ENCODE measurements at regions of chr16 and their contacts with region 1.

Region 1: GRCh38 chr16:67226804-67227557 is at the start of gene TMEM208:
- DNase-seq: peak; percentile 99
- ATAC-seq: peak; percentile 99
- H3K4me3 ChIP-seq: peak within 1 kb of the TSS; percentile 77 to 99 (median 86)
- H3K4me3 Mint-ChIP-seq: peak within 1 kb of the TSS; percentile 100
- H3K27ac ChIP-seq: peak within 1 kb of the TSS; percentile 52 to 82
- H3K27ac Mint-ChIP-seq: peak within 1 kb of the TSS; percentile 100
- H3K4me1 ChIP-seq: peaks cover 15 to 22% of the 10 kb centered on the region in 2 donors
- H3K4me1 Mint-ChIP-seq: peaks cover 29% of the 10 kb centered on the region
- H3K27me3 ChIP-seq: no peaks in the 10 kb centered on the region
- H3K27me3 Mint-ChIP-seq: no peaks in the 10 kb centered on the region
- CTCF ChIP-seq: peak; percentile 13
- total RNA-seq, gene TMEM208: 36.3 and 40.4 TPM in 2 replicates

Region 2: GRCh38 chr16:67084345-67085028 is 142.5 kb before region 1 on chr16:
- CTCF ChIA-PET with region 1: no interaction called
- POLR2A ChIA-PET with region 1: no interaction called
- intact Hi-C with region 1: no loop called
- DNase-seq: no peak
- ATAC-seq: no peak
- H3K4me3 ChIP-seq: no peak overlapping the region
- H3K4me3 Mint-ChIP-seq: no peak overlapping the region
- H3K27ac ChIP-seq: no peak overlapping the region
- H3K27ac Mint-ChIP-seq: no peak overlapping the region
- H3K4me1 ChIP-seq: peaks cover 0 to 3% of the 10 kb centered on the region in 2 donors
- H3K4me1 Mint-ChIP-seq: peaks cover 4% of the 10 kb centered on the region
- H3K27me3 ChIP-seq: no peaks in the 10 kb centered on the region
- H3K27me3 Mint-ChIP-seq: no peaks in the 10 kb centered on the region
- CTCF ChIP-seq: no peak

Region 3: GRCh38 chr16:67191995-67192681 is 34.8 kb before region 1 on chr16 and contains the start of gene E2F4:
- CTCF ChIA-PET with region 1: interaction called, 3 read pairs
- POLR2A ChIA-PET with region 1: interaction called, 4 read pairs
- intact Hi-C with region 1: loop called (anchors 1 kb)
- DNase-seq: peak; percentile 93
- ATAC-seq: peak; percentile 96
- H3K4me3 ChIP-seq: peak within 1 kb of the TSS; percentile 54 to 98 (median 97)
- H3K4me3 Mint-ChIP-seq: peak within 1 kb of the TSS; percentile 92
- H3K27ac ChIP-seq: peak within 1 kb of the TSS; percentile 52 to 93
- H3K27ac Mint-ChIP-seq: peak within 1 kb of the TSS; percentile 92
- H3K4me1 ChIP-seq: peaks cover 22 to 28% of the 10 kb centered on the region in 2 donors
- H3K4me1 Mint-ChIP-seq: peaks cover 34% of the 10 kb centered on the region
- H3K27me3 ChIP-seq: peaks cover 0 to 17% (median under 1%) of the 10 kb centered on the region in 4 experiments
- H3K27me3 Mint-ChIP-seq: peaks cover 2% of the 10 kb centered on the region
- CTCF ChIP-seq: no peak
- total RNA-seq, gene E2F4: 104 and 106 TPM in 2 replicates

Measured in B cell (primary cell).